Activated T-helper 2 cell treated with anti-CD3 and anti-CD28 coated beads, Interferon-gamma antibody, Interleukin-2, Interleukin-4, amounts not matched to agents 10 μg/mL and 5 μg/mL and 100 μg/mL, durations not matched to agents 14 hours and 24 hours and 36 hours (primary cell): ENCODE measurements at regions of chr11 and their contacts with region 1.

Region 1: DNA sequence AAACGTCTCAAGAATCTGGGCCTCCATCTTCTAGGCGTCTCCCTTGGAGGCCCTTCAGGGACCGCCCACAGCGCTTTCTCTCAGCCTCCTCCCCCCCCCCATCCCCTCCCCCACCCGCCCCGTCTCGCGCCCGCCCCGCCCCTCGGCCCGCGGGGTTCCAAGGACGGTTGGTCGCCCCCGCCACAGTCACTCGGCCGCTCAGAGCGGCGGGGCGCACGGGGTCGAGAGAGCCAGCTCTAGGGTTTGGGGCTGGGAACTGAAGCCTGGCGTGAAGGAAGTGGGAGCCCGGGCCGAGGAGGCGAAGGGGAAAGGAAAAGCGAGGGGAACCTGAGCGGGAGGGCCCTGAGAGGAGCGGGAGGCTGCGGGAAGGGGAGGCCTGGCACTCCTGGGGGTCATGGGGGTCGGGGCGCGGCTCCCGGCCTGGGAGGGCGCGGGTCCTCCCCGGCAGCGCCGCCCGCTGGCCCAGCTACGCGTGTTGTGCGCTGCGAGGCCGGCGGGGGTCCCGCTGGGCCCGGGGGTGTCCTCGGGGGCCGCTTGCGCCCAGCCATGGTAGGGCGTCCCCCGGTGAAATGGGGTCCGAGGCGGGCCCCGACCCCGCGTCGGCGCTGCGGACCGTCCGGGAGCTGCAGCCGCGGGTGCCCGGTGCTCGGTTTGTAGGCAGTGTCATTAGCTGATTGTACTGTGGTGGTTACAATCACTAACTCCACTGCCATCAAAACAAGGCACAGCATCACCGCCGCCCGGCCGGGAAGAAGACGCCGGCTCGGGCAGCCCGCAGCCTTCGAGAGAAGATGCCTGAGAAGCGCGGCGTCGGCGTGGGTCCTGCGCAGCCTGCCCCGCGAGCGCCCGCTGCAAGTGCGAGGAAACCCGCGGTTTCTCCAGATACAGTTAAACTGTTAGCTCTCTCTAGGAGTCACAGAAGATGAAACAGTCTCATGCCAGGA is at the start of gene BTG4:
- DNase-seq: no peak
- H3K4me3 Mint-ChIP-seq: peak within 1 kb of the TSS; percentile 76
- H3K27ac Mint-ChIP-seq: peak within 1 kb of the TSS; percentile 46
- H3K4me1 Mint-ChIP-seq: peaks cover 8% of the 10 kb centered on the region
- H3K27me3 Mint-ChIP-seq: peaks cover 50% of the 10 kb centered on the region
- total RNA-seq, gene BTG4: not detected in 2 replicates

Region 2: GRCh38 chr11:111460856-111461255 is 51.7 kb before region 1 on chr11:
- intact Hi-C with region 1: no loop called
- DNase-seq: no peak
- H3K4me3 Mint-ChIP-seq: no peak overlapping the region
- H3K27ac Mint-ChIP-seq: no peak overlapping the region
- H3K4me1 Mint-ChIP-seq: no peaks in the 10 kb centered on the region
- H3K27me3 Mint-ChIP-seq: peaks cover 14% of the 10 kb centered on the region

Region 3: DNA sequence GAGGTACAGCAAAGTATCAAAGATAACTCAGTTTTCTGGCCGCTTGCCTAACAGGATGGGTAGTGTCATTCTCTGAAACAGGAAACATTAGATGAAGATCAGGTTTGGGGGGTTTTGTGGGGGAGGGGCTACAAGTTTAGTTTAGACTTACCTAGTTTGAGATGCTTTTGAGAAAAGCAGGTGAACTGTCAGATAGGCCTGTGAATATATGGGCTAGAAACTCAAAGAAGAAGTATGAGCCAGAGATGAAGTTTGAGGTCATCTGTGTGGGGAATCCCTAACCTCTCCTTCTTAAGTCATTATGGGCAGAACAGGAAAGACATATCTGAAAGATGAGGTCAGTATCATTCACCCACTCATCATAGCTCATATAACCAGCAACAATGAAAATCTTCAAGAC is 13.9 kb after region 1 on chr11:
- intact Hi-C with region 1: loop called (anchors 2 kb)
- DNase-seq: no peak
- H3K4me3 Mint-ChIP-seq: no peak overlapping the region
- H3K27ac Mint-ChIP-seq: peak overlapping the region; percentile 49
- H3K4me1 Mint-ChIP-seq: peaks cover 42% of the 10 kb centered on the region
- H3K27me3 Mint-ChIP-seq: no peaks in the 10 kb centered on the region